Naive thymus-derived CD4-positive, alpha-beta T cell (primary cell): ENCODE measurements at regions of chr15 and their contacts with region 1.

Region 1: GRCh38 chr15:25863111-25863967 is at the start of gene ATP10A:
- DNase-seq: peak in 8 of 9 donors; percentile 26 to 80 (median 44)
- ATAC-seq: no peak
- H3K4me3 ChIP-seq: peak within 1 kb of the TSS; percentile 88
- H3K4me3 Mint-ChIP-seq: peak within 1 kb of the TSS; percentile 88 to 98 (median 96)
- H3K27ac ChIP-seq: peak within 1 kb of the TSS; percentile 86
- H3K27ac Mint-ChIP-seq: peak within 1 kb of the TSS; percentile 89 to 100 (median 97)
- H3K4me1 ChIP-seq: peaks cover 15 to 18% of the 10 kb centered on the region in 2 donors
- H3K4me1 Mint-ChIP-seq: peaks cover 20 to 50% (median 40%) of the 10 kb centered on the region in 7 donors
- H3K27me3 ChIP-seq: no peaks in the 10 kb centered on the region
- H3K27me3 Mint-ChIP-seq: peaks cover 0 to 8% (median 0%) of the 10 kb centered on the region in 5 donors
- total RNA-seq, gene ATP10A: 56.7 to 86.4 (median 71.2) TPM

Region 2: GRCh38 chr15:24956111-24956838 is 907.1 kb before region 1 on chr15:
- CTCF ChIA-PET with region 1: no interaction called
- POLR2A ChIA-PET with region 1: no interaction called
- intact Hi-C with region 1: loop called in 1 of 2 experiments (anchors 5 kb)
- DNase-seq: peak; percentile 57 to 85 (median 77)
- ATAC-seq: peak; percentile 86
- H3K4me3 ChIP-seq: peak overlapping the region; percentile 92
- H3K4me3 Mint-ChIP-seq: peak overlapping the region; percentile 92 to 99 (median 95)
- H3K27ac ChIP-seq: peak overlapping the region; percentile 85
- H3K27ac Mint-ChIP-seq: peak overlapping the region; percentile 90 to 98 (median 97)
- H3K4me1 ChIP-seq: peaks cover 0 to 8% of the 10 kb centered on the region in 2 donors
- H3K4me1 Mint-ChIP-seq: peaks cover 0 to 23% (median 13%) of the 10 kb centered on the region in 7 donors
- H3K27me3 ChIP-seq: no peaks in the 10 kb centered on the region
- H3K27me3 Mint-ChIP-seq: peaks cover 0 to 6% (median 0%) of the 10 kb centered on the region in 5 donors

Region 3: DNA sequence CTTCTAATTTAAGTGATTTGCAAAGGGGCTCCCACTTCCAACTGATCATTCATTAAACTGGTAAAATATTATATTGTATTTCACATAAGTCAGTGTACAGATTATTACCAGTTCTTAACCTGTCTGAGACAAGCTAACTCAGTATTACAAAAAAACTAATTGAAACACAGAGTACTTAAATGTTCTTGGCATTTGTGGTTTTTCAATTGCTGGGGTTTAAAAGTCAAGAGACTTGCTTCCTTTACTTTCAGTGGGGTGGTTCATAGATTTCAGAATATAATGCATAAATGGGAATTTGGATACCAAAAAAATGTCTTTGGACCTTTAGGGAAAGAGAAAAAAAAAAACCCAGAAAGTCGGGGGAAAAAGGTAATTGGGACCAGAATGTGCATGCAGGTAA is 85.2 kb before region 1 on chr15:
- CTCF ChIA-PET with region 1: interaction called, 17 read pairs
- POLR2A ChIA-PET with region 1: interaction called, 3 read pairs
- intact Hi-C with region 1: loop called (anchors 1 to 2 kb)
- DNase-seq: no peak
- ATAC-seq: no peak
- H3K4me3 ChIP-seq: no peak overlapping the region
- H3K4me3 Mint-ChIP-seq: peak overlapping the region in 8 of 10 donors; percentile 47 to 81 (median 56)
- H3K27ac ChIP-seq: no peak overlapping the region
- H3K27ac Mint-ChIP-seq: peak overlapping the region in 6 of 9 donors; percentile 45 to 72 (median 64)
- H3K4me1 ChIP-seq: peaks cover 0 to 15% of the 10 kb centered on the region in 2 donors
- H3K4me1 Mint-ChIP-seq: peaks cover 18 to 67% (median 38%) of the 10 kb centered on the region in 7 donors
- H3K27me3 ChIP-seq: no peaks in the 10 kb centered on the region
- H3K27me3 Mint-ChIP-seq: no peaks in the 10 kb centered on the region

Region 4: DNA sequence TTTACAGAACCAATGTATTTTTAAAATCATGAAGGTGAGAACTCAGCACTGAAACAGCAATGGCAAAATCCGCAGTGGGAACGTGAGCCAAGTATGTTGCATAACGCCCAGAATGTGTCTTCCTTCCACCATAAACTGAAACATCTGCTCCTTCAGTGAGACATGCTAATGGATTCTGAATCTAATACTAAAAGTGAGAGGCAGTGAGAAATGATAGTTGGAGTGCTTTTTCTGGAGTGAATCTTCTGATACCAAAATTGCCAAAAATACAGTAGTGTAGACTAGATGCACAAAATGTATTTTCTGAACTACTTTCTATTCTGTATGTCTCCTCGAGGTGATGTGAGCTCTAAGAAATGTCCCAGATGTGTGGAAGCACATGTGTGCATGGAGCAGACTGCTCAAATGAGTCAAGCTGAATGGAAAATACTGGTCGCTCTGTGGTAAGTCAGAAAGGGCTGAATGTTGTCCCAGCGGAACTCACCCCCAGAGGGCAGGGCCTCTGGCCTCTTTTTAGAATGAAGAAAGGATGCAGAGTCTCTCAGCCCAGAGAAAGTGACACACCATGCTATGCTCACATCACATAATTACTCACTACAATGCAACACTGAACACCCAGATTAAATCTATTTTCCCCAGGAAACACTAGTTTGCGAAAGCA is 73.2 kb before region 1 on chr15:
- CTCF ChIA-PET with region 1: interaction called, 3 read pairs
- POLR2A ChIA-PET with region 1: interaction called, 3 read pairs
- intact Hi-C with region 1: loop called in 1 of 2 experiments (anchors 2 kb)
- DNase-seq: peak in 1 of 9 donors; percentile 66
- ATAC-seq: peak; percentile 25
- H3K4me3 ChIP-seq: no peak overlapping the region
- H3K4me3 Mint-ChIP-seq: no peak overlapping the region
- H3K27ac ChIP-seq: no peak overlapping the region
- H3K27ac Mint-ChIP-seq: peak overlapping the region in 7 of 9 donors; percentile 3 to 89 (median 48)
- H3K4me1 ChIP-seq: peaks cover 0 to 5% of the 10 kb centered on the region in 2 donors
- H3K4me1 Mint-ChIP-seq: peaks cover 56 to 82% (median 69%) of the 10 kb centered on the region in 7 donors
- H3K27me3 ChIP-seq: no peaks in the 10 kb centered on the region
- H3K27me3 Mint-ChIP-seq: no peaks in the 10 kb centered on the region

Region 5: GRCh38 chr15:25811481-25811906 is 51.8 kb before region 1 on chr15:
- CTCF ChIA-PET with region 1: interaction called, 4 read pairs
- POLR2A ChIA-PET with region 1: interaction called, 91 read pairs
- intact Hi-C with region 1: loop called (anchors 1 kb)
- DNase-seq: peak in 5 of 9 donors; percentile 20 to 47 (median 27)
- ATAC-seq: peak; percentile 50
- H3K4me3 ChIP-seq: peak overlapping the region; percentile 37
- H3K4me3 Mint-ChIP-seq: peak overlapping the region; percentile 74 to 95 (median 84)
- H3K27ac ChIP-seq: peak overlapping the region; percentile 64
- H3K27ac Mint-ChIP-seq: peak overlapping the region; percentile 80 to 98 (median 94)
- H3K4me1 ChIP-seq: peaks cover 20 to 51% of the 10 kb centered on the region in 2 donors
- H3K4me1 Mint-ChIP-seq: peaks cover 45 to 98% (median 81%) of the 10 kb centered on the region in 7 donors
- H3K27me3 ChIP-seq: no peaks in the 10 kb centered on the region
- H3K27me3 Mint-ChIP-seq: no peaks in the 10 kb centered on the region

Region 6: DNA sequence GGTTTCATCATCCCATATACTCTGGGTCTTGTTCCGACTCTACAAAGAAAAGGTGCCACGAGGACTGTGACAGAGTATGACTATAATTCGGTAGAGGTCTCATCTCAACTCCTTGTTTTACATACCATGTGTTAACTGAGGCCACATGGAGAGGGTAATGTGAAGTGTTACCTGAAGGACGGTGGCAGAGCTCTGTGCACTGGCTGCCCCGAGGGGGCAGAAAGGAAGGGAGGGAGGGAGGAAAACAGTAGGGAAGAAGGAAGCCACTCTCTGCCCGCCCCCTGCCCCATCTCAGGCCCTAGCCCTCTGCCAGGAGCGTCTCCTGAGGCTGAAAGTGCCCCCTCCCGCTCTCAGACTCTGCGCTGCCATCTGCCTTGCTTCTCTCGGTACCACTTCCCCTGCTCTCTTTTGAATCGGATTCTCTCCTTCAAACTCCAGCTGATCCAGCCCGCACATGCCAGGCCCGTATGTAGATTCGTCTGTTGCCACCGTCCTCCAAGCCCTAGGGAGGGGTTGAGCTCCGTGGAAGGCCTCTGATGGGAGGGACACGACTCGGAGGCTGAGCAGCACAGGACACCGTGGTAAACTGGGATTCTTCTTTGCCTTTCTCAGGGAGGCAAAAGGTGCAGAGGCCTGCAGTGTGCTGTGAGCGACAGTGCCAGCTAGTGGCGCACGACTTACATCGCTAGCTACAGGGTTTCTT is 70.3 kb after region 1 on chr15:
- CTCF ChIA-PET with region 1: interaction called, 6 read pairs
- POLR2A ChIA-PET with region 1: interaction called, 5 read pairs
- intact Hi-C with region 1: loop called in 1 of 2 experiments (anchors 1 kb)
- DNase-seq: peak; percentile 36 to 77 (median 68)
- ATAC-seq: peak; percentile 97
- H3K4me3 ChIP-seq: peak overlapping the region; percentile 73
- H3K4me3 Mint-ChIP-seq: peak overlapping the region; percentile 78 to 98 (median 90)
- H3K27ac ChIP-seq: no peak overlapping the region
- H3K27ac Mint-ChIP-seq: peak overlapping the region in 7 of 9 donors; percentile 21 to 79 (median 51)
- H3K4me1 ChIP-seq: no peaks in the 10 kb centered on the region
- H3K4me1 Mint-ChIP-seq: peaks cover 0 to 10% (median 8%) of the 10 kb centered on the region in 7 donors
- H3K27me3 ChIP-seq: no peaks in the 10 kb centered on the region
- H3K27me3 Mint-ChIP-seq: peaks cover 0 to 11% (median 5%) of the 10 kb centered on the region in 5 donors

Region 7: DNA sequence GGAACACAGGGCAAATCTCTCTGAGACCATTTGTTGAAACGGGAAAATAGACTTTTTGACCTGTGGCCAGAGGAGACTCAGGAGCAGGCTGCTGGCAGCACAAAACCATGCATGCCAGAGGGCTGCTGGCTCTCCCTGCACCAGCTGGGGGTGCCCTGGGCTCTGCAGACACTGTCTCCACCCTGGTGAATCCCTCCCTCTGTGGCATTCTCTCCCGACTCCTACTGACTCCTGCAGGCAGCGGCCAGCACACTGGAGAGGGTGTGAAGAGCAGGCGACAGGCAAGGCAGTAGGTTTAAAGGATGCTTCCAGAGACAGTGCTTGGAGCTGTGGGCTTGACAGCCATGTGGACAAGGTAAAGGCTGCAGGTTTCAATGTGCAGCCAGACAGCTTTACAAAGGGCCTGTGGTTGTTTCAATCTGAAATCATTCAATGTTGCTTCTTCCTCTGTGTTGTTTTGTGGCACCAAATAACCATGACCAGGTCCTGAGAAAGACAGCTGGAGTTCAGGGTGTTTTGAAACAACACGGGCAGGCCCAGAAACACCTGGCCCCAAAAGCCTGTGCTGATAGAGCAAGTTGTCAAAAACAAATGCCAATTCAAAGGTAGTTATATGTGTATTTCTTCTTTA is 430.8 kb after region 1 on chr15:
- CTCF ChIA-PET with region 1: no interaction called
- POLR2A ChIA-PET with region 1: no interaction called
- intact Hi-C with region 1: no loop called
- DNase-seq: no peak
- ATAC-seq: no peak
- H3K4me3 ChIP-seq: no peak overlapping the region
- H3K4me3 Mint-ChIP-seq: no peak overlapping the region
- H3K27ac ChIP-seq: no peak overlapping the region
- H3K27ac Mint-ChIP-seq: no peak overlapping the region
- H3K4me1 ChIP-seq: no peaks in the 10 kb centered on the region
- H3K4me1 Mint-ChIP-seq: no peaks in the 10 kb centered on the region
- H3K27me3 ChIP-seq: no peaks in the 10 kb centered on the region
- H3K27me3 Mint-ChIP-seq: peaks cover 0 to 12% (median 5%) of the 10 kb centered on the region in 5 donors